Activated CD4-positive, alpha-beta T cell treated with anti-CD3 and anti-CD28 coated beads for 36 hours (primary cell): ENCODE measurements at regions of chr16 and their contacts with region 1.

Region 1: DNA sequence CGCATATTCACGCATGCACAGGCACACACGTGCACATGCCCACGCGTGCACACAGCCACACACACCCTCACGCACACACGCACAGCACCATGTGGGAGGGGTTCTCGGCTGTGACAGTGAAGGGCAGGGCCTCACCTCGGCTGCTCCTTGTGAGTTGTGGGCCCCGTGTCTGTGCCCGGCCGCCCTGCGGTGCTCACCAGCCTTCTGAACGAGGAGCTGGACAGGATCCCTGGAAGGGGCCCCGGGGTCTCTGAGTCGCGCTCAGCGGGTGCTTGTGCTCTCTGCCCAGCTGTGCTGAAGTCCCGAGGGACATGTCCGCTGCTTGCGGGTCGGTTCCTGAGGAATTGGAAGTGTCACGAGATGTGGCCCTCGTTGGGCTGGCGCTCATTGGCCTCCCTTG is 16.1 kb downstream of the TSC2 start:
- DNase-seq: no peak
- ATAC-seq: no peak
- H3K4me3 Mint-ChIP-seq: no peak overlapping the region
- H3K27ac Mint-ChIP-seq: no peak overlapping the region
- H3K4me1 Mint-ChIP-seq: no peaks in the 10 kb centered on the region
- H3K27me3 Mint-ChIP-seq: no peaks in the 10 kb centered on the region

Region 2: GRCh38 chr16:2023098-2023925 is 40.5 kb before region 1 on chr16:
- CTCF ChIA-PET with region 1: no interaction called
- POLR2A ChIA-PET with region 1: no interaction called
- intact Hi-C with region 1: loop called in 1 of 2 experiments (anchors 5 kb)
- DNase-seq: peak; percentile 97
- ATAC-seq: peak; percentile 86
- H3K4me3 Mint-ChIP-seq: peak overlapping the region; percentile 46
- H3K27ac Mint-ChIP-seq: no peak overlapping the region
- H3K4me1 Mint-ChIP-seq: peaks cover 15% of the 10 kb centered on the region
- H3K27me3 Mint-ChIP-seq: peaks cover 27% of the 10 kb centered on the region